PC-3 (cell line): ENCODE measurements at regions of chr22 and their contacts with region 1.

Region 1: GRCh38 chr22:37457093-37457893 is 28.9 kb downstream of the MFNG start:
- DNase-seq: peak; percentile 85
- ATAC-seq: peak; percentile 78
- H3K4me3 ChIP-seq: no peak overlapping the region
- H3K27ac ChIP-seq: 0 out of 2 replicates have a peak overlapping the region, but pooled peaks have one; percentile 93
- H3K4me1 ChIP-seq: peaks cover 25% of the 10 kb centered on the region
- H3K27me3 ChIP-seq: no peaks in the 10 kb centered on the region
- CTCF ChIP-seq: peak; percentile 95

Region 2: DNA sequence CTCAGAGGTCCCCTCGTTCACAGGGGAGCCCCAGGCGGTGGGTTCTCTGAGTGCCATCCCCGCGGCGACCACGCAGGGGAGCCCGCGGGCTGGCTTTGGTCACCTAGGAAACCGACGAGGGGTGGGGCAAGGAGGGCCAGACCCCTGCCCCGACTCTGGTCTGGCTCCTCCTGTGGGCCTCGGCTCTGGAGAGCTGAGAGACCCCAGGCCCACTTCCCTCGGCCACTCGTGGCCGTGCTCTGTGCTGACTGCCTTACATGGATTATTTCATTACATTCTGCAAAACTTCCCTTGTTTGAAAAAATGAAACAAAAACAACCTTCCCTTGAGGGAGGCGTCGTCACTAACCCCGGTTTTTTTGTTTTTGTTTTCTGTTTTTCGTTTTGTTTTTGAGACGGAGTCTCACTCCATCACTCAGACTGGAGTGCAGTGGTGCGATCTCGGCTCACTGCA is 190.1 kb before region 1 on chr22:
- CTCF ChIA-PET with region 1: no interaction called
- POLR2A ChIA-PET with region 1: no interaction called
- intact Hi-C with region 1: loop called (anchors 1 kb)
- DNase-seq: peak; percentile 57
- ATAC-seq: peak; percentile 79
- H3K4me3 ChIP-seq: peak overlapping the region; percentile 70
- H3K27ac ChIP-seq: no peak overlapping the region
- H3K4me1 ChIP-seq: peaks cover 2% of the 10 kb centered on the region; the same call in 1 of the 2 replicates
- H3K27me3 ChIP-seq: no peaks in the 10 kb centered on the region
- CTCF ChIP-seq: peak; percentile 83

Region 3: DNA sequence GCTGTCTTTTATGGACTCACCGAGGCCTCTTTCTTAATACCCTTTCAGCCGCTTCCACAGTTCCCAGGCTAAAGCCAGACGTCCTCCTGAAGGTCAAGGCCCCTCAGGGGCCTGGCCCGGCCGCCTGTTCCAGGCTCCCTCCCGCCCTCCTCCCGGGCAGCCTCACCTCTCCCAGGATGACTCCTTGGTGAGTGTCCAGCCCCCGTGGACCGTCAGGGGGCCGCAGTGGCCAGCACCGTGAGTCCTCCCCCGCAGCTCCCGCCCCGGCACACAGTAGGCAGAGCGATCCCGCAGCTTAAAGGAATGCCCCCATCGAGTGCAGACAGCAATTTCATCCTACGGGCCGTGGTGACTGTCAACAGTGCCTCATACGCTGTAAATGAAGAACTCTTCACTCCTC is 63.0 kb before region 1 on chr22:
- CTCF ChIA-PET with region 1: no interaction called
- POLR2A ChIA-PET with region 1: no interaction called
- intact Hi-C with region 1: no loop called
- DNase-seq: no peak
- ATAC-seq: no peak
- H3K4me3 ChIP-seq: no peak overlapping the region
- H3K27ac ChIP-seq: no peak overlapping the region
- H3K4me1 ChIP-seq: no peaks in the 10 kb centered on the region
- H3K27me3 ChIP-seq: no peaks in the 10 kb centered on the region
- CTCF ChIP-seq: no peak